K562 (cell line): ENCODE measurements at regions of chr3 and their contacts with region 1.

Region 1: DNA sequence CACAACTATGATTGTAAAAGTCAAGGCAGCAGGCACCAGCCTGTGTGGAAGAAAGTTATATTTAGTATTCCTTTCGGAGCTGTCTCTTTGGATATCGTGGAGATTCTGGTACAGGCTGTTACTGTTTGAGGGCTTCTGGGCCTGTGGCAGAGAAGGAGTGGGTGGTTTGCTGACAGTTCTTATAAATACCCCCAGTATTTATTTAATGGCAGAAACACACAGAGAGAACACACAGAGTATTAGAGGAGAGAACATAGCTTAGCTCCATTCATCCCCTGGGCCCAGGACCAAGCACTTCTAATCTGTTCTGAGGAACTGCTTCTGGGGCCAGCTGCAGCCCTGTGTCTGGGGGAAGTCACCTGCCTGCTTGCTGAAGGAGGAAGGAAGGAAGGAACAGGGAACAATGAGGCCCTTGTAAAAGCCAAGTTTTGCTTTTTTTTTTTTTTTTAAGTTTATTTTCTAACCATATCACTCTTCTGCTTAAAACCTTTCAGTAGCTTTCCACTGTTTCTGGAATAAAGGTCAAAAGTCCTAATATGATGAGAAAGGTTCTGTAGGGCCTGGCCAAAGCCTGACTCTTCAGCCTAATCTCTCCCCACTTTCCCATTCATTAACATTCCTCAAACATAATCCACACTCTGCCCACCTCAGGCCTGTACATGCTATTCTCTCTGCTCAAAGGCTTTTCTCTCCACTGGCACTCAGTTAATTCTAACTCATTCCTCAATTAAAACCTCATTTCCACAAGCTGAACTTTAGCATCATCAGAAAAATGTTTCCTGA is 11.8 kb upstream of the PP2D1 start:
- DNase-seq: peak in 2 of 4 experiments; percentile 59 to 77
- ATAC-seq: peak; percentile 80
- H3K4me3 ChIP-seq: no peak overlapping the region
- H3K27ac ChIP-seq: peak overlapping the region; percentile 66
- H3K4me1 ChIP-seq: peaks cover 15 to 24% of the 10 kb centered on the region in 2 experiments; a peak in 4 of 5 replicates
- H3K27me3 ChIP-seq: no peaks in the 10 kb centered on the region
- CTCF ChIP-seq: no peak
- EP300 ChIP-seq: no peak
- POLR2A ChIP-seq: no peak
- RAD21 ChIP-seq: no peak

Region 2: GRCh38 chr3:20013396-20013795 is 10.4 kb before region 1 on chr3:
- CTCF ChIA-PET with region 1: no interaction called
- POLR2A ChIA-PET with region 1: interaction called, 15 read pairs
- in situ Hi-C with region 1: no loop called
- intact Hi-C with region 1: no loop called
- DNase-seq: peak in 3 of 4 experiments; percentile 34 to 60 (median 41)
- ATAC-seq: peak; percentile 56
- H3K4me3 ChIP-seq: no peak overlapping the region
- H3K27ac ChIP-seq: no peak overlapping the region
- H3K4me1 ChIP-seq: peaks cover 23 to 29% of the 10 kb centered on the region in 2 experiments; a peak in 4 of 5 replicates
- H3K27me3 ChIP-seq: no peaks in the 10 kb centered on the region
- CTCF ChIP-seq: no peak
- EP300 ChIP-seq: no peak
- POLR2A ChIP-seq: no peak
- RAD21 ChIP-seq: no peak